Caco-2 (cell line): ENCODE measurements at regions of chr10 and their contacts with region 1.

Region 1: DNA sequence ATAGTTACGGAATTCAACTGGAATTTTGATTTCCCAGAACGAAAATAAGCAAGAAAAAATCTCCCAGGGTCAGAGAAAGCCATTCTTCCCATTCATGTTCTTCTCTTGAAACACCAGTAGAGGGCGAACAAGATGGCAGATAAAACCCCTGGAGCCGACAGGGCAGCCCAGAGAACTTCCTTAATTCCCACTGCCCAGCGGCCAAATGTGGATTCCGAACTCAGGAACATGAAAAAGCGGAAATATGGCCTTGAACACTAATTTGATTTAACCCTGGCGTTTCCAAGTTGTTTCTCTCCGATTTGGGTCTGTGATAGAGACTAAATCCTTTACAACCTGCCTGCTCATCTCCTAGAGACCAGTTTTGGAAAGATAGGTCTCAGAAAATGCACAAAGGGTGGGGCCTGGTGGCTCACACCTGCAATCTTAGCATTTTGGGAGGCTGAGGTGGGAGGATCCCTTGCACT is 100.7 kb upstream of the WAC start:
- DNase-seq: peak; percentile 81 to 83
- H3K4me3 ChIP-seq: no peak overlapping the region
- H3K4me3 Mint-ChIP-seq: peak overlapping the region; percentile 41
- H3K27ac Mint-ChIP-seq: no peak overlapping the region
- H3K4me1 ChIP-seq: no peaks in the 10 kb centered on the region
- H3K4me1 Mint-ChIP-seq: no peaks in the 10 kb centered on the region
- H3K27me3 ChIP-seq: no peaks in the 10 kb centered on the region
- H3K27me3 Mint-ChIP-seq: no peaks in the 10 kb centered on the region
- CTCF ChIP-seq: peak; percentile 94 to 95

Region 2: GRCh38 chr10:28359334-28359733 is 72.9 kb before region 1 on chr10:
- CTCF ChIA-PET with region 1: no interaction called
- POLR2A ChIA-PET with region 1: no interaction called
- intact Hi-C with region 1: no loop called
- DNase-seq: no peak
- H3K4me3 ChIP-seq: no peak overlapping the region
- H3K4me3 Mint-ChIP-seq: no peak overlapping the region
- H3K27ac Mint-ChIP-seq: peak overlapping the region; percentile 43
- H3K4me1 ChIP-seq: peaks cover 26% of the 10 kb centered on the region
- H3K4me1 Mint-ChIP-seq: peaks cover 32% of the 10 kb centered on the region
- H3K27me3 ChIP-seq: no peaks in the 10 kb centered on the region
- H3K27me3 Mint-ChIP-seq: no peaks in the 10 kb centered on the region
- CTCF ChIP-seq: no peak

Region 3: DNA sequence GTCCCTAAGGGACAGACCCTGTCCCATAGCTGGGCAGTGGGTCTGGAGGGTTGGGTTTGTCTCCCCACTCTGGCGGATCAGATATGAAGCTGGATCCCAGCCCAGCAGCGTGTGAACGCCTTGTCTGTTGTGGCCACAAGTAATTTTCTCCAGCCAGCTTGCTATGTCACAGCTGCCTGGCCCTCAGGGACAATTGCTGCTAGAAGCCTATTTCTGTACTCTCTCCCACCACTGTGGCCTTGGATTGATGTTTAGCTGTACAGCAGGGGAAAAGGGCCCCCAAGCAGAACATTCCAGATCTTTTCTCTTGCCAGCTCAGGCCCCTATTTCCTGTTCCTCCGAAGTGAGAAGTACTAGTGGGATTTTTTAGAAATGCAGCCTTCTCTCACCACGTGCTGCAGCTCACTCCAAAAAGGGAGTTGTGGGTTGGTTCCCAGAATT is 47.2 kb after region 1 on chr10:
- CTCF ChIA-PET with region 1: no interaction called
- POLR2A ChIA-PET with region 1: no interaction called
- intact Hi-C with region 1: no loop called
- DNase-seq: no peak
- H3K4me3 ChIP-seq: no peak overlapping the region
- H3K4me3 Mint-ChIP-seq: no peak overlapping the region
- H3K27ac Mint-ChIP-seq: no peak overlapping the region
- H3K4me1 ChIP-seq: no peaks in the 10 kb centered on the region
- H3K4me1 Mint-ChIP-seq: no peaks in the 10 kb centered on the region
- H3K27me3 ChIP-seq: no peaks in the 10 kb centered on the region
- H3K27me3 Mint-ChIP-seq: no peaks in the 10 kb centered on the region
- CTCF ChIP-seq: no peak

Region 4: DNA sequence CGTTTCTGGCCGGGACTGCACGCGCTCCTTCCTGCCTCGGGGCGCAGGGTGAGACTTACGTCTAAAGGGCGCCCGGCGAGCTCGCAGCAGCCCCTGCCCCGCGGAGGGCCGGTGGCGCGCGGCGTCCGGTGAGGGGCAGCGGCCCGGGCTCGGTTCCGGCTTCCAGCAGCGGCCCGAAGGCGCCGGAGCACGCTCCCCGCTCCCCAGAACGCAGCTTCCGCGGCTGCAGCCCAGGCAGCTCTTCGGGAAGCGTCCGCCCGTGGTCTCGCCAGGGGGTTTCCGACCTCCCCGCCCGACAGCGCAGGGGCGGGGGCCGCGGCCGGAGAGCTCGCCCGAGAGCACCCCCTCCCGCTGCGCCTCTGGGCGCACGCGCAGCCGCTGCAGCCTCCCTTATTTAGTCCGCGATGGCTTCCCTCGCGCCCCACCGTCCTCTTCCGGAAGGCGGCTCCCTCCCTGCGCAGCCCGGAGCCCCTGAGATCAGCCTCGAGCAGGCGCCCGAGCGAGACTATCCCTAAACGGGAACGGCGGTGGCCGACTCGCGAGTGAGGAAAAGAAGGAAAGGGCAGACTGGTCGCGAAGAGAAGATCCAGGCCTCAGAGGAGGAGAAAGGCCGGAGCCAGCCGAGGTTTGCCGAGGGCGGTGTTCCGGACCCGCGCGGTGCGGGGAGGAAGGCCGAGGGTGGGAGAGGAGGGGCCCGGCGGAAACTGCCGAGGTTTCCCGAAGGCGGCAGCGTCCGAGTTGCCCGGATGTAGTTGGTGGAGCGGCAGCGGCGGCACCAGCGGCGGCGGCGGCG is 100.3 kb after region 1 on chr10 and contains the start of gene WAC:
- CTCF ChIA-PET with region 1: no interaction called
- POLR2A ChIA-PET with region 1: no interaction called
- intact Hi-C with region 1: loop called (anchors 1 kb)
- DNase-seq: peak; percentile 97 to 99
- H3K4me3 ChIP-seq: peak within 1 kb of the TSS; percentile 98
- H3K4me3 Mint-ChIP-seq: peak within 1 kb of the TSS; percentile 100
- H3K27ac Mint-ChIP-seq: peak within 1 kb of the TSS; percentile 100
- H3K4me1 ChIP-seq: peaks cover 16% of the 10 kb centered on the region
- H3K4me1 Mint-ChIP-seq: peaks cover 24% of the 10 kb centered on the region
- H3K27me3 ChIP-seq: no peaks in the 10 kb centered on the region
- H3K27me3 Mint-ChIP-seq: no peaks in the 10 kb centered on the region
- CTCF ChIP-seq: peak in 1 of 2 experiments; percentile 49
- total RNA-seq, gene WAC: 196 TPM in 2 replicates

Region 5: DNA sequence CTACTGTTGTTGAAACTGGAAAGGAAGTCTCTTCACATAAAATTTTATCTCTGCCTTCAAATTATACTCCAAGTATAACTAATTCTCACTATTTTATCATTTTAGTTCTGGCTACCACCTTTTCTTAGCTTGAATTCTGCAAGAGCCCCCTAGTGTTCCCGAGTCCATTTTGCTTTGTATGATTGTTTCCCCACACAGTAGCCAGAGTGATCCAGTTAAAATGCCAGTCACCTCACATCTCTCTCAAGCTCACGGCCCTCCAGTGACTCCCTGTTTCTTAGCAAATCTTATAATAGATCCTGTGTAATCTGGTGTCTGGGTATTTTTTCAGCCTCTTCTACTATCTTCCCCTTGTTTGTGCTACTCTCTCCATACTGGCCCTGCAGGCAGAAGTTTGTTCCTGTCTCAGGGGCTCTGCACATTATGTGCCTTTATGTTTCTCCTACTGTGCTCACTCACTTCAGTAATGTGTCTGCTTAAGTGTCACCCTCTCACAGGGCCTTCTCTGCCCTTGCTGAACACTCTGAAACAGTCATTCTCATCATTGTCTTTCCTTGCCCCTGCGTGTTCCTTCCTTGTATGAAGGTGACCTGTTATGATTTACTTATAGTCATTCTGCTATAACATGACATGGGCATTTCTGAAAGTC is 109.6 kb after region 1 on chr10:
- CTCF ChIA-PET with region 1: no interaction called
- POLR2A ChIA-PET with region 1: no interaction called
- intact Hi-C with region 1: loop called (anchors 1 kb)
- DNase-seq: no peak
- H3K4me3 ChIP-seq: no peak overlapping the region
- H3K4me3 Mint-ChIP-seq: no peak overlapping the region
- H3K27ac Mint-ChIP-seq: no peak overlapping the region
- H3K4me1 ChIP-seq: 0 out of 2 replicates have a peak, but pooled peaks cover 3% of the 10 kb centered on the region
- H3K4me1 Mint-ChIP-seq: no peaks in the 10 kb centered on the region
- H3K27me3 ChIP-seq: no peaks in the 10 kb centered on the region
- H3K27me3 Mint-ChIP-seq: no peaks in the 10 kb centered on the region
- CTCF ChIP-seq: peak in 1 of 2 experiments; percentile 34

Region 6: DNA sequence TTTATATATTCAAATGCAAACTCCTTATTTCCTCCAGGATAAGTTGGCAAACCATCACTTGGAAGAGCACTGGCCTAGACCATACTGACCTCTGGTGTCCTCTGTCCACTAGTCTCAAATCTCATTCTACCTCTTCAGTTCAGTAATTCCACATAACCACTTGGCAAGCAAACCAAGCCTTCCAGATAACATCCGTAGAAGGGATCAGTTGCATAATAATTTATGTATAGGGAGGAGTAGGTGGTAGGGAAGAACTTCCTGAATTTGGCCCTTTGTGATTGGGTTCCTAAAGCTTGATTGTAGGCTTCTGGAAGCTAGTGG is 155.7 kb after region 1 on chr10:
- CTCF ChIA-PET with region 1: no interaction called
- POLR2A ChIA-PET with region 1: no interaction called
- intact Hi-C with region 1: loop called (anchors 1 kb)
- DNase-seq: peak in 1 of 2 experiments; percentile 34
- H3K4me3 ChIP-seq: no peak overlapping the region
- H3K4me3 Mint-ChIP-seq: no peak overlapping the region
- H3K27ac Mint-ChIP-seq: no peak overlapping the region
- H3K4me1 ChIP-seq: peaks cover 10% of the 10 kb centered on the region; the same call in 1 of the 2 replicates
- H3K4me1 Mint-ChIP-seq: peaks cover 22% of the 10 kb centered on the region
- H3K27me3 ChIP-seq: no peaks in the 10 kb centered on the region
- H3K27me3 Mint-ChIP-seq: no peaks in the 10 kb centered on the region
- CTCF ChIP-seq: peak in 1 of 2 experiments; percentile 43